Caco-2 (cell line): ENCODE measurements at regions of chr11 and their contacts with region 1.

Region 1: DNA sequence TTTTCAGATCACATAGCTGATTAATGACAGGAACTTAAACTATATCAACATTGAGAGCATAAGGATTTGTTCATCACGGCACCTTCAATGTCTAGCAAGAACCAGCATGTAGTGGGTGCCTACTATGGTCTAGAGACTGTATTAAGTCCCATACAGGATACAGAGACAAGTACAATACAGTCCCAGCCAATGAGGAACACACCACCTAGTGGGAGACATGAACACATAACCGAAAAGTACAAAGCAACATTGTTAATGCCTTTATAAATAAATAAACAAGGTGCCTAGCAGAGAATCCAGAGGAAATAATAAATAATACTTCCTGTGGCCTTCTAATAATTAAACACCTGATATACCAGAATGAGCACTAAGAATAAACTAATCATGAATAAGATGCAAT is 87.7 kb upstream of the OPCML start:
- DNase-seq: peak in 1 of 2 experiments; percentile 16
- H3K4me3 ChIP-seq: no peak overlapping the region
- H3K4me3 Mint-ChIP-seq: no peak overlapping the region
- H3K27ac Mint-ChIP-seq: no peak overlapping the region
- H3K4me1 ChIP-seq: no peaks in the 10 kb centered on the region
- H3K4me1 Mint-ChIP-seq: no peaks in the 10 kb centered on the region
- H3K27me3 ChIP-seq: no peaks in the 10 kb centered on the region
- H3K27me3 Mint-ChIP-seq: no peaks in the 10 kb centered on the region
- CTCF ChIP-seq: peak; percentile 10 to 30

Region 2: DNA sequence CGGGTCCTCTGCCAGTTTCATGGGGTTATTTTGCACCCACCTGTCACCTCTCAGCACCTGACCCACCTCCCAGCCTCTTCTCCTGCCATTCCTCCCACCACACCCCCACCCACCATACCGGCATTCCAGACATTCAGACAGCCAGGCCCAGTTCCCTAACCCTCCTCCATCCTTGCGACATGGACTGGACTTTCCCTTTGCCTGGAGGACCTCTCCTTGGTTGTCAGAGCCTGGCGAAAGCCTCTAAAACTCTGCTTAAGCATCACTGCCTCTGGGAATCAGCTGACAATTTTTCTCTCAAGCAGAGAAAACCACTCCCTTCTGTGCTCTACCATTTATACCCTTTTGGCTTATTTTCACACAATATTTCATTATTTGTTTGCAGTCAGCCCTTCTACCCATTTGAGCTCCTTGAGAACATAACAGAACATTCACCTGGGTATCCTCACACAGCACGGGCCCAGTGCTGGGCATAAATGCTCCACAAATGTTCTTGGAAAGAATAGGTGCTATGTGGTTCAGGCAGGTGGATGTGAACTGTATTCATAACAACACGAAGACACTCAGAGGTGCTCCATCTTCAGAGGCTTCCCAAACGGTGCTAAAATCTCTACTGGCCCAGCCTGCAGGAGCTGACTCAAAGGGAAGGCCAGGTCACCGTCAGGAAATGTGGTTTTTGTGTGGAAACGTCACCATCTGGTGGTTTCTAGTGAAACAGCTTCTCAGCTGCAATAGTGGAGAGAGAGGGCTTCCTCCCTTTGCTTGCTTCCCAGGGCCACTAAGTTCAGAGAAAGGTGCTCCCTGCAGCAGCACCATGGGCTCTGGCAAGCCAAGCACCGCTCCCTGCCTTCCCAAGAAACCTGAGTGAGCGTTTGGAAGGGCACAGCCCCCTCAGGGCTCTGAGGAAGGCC is 215.0 kb after region 1 on chr11:
- CTCF ChIA-PET with region 1: interaction called, 9 read pairs
- POLR2A ChIA-PET with region 1: no interaction called
- intact Hi-C with region 1: loop called (anchors 1 kb)
- DNase-seq: peak; percentile 75 to 76
- H3K4me3 ChIP-seq: no peak overlapping the region
- H3K4me3 Mint-ChIP-seq: no peak overlapping the region
- H3K27ac Mint-ChIP-seq: peak overlapping the region; percentile 27
- H3K4me1 ChIP-seq: no peaks in the 10 kb centered on the region
- H3K4me1 Mint-ChIP-seq: no peaks in the 10 kb centered on the region
- H3K27me3 ChIP-seq: no peaks in the 10 kb centered on the region
- H3K27me3 Mint-ChIP-seq: peaks cover 3% of the 10 kb centered on the region
- CTCF ChIP-seq: peak; percentile 78 to 81